ENCODE measurements at regions of chr6 and their contacts with region 1.

Region 1: DNA sequence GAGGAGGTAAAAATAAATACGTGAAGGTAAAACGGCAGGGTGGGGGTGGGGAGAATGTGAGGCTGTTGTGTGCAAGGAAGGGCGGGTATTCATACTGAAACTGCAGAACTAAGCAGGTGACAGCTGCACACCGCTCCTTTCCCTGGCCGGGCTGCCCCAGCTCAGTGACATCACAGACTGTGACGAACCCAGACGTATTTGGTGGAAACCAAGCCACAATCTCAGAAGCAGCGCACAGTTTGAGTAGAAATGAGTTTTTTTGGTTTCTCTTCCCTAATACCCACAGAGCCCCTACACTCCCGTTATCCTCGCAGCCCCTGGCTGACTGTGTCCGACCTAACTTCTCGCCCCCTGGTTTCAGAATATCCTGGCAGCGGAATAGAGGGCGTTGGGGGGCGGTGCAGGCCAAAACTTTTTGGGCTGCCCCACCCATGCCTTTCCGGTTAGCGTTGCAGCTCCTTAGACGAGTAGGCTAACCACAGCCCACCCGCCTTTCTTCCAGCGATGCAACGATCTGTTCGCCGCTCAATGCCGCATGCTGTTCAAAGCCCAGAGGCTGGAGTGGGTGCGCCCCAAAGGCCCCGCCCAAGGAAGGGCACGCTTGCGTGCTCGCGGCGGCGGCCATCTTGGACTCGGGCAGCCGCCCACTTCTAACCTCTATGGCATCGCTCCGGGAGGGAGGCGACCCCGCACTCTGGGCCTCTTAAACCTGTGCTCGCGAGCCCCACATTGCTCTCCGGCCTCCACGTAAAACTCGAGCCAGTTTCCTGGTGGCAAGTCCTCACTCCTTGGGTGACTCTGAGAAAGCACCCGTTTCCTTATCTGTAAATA is 9.1 kb downstream of the BAK1 start:
- DNase-seq: peak; percentile 98
- ATAC-seq: peak; percentile 94
- H3K4me3 Mint-ChIP-seq: peak overlapping the region; percentile 83
- H3K27ac Mint-ChIP-seq: peak overlapping the region; percentile 100
- H3K4me1 Mint-ChIP-seq: peaks cover 54% of the 10 kb centered on the region
- H3K27me3 Mint-ChIP-seq: no peaks in the 10 kb centered on the region

Region 2: GRCh38 chr6:33430991-33431879 is 139.8 kb before region 1 on chr6:
- CTCF ChIA-PET with region 1: interaction called, 4 read pairs
- POLR2A ChIA-PET with region 1: interaction called, 10 read pairs
- DNase-seq: peak; percentile 93
- ATAC-seq: peak; percentile 67
- H3K4me3 Mint-ChIP-seq: peak overlapping the region; percentile 84
- H3K27ac Mint-ChIP-seq: peak overlapping the region; percentile 86
- H3K4me1 Mint-ChIP-seq: peaks cover 65% of the 10 kb centered on the region
- H3K27me3 Mint-ChIP-seq: no peaks in the 10 kb centered on the region

Region 3: GRCh38 chr6:33454009-33454946 is 116.7 kb before region 1 on chr6 and contains the start of gene ZBTB9:
- CTCF ChIA-PET with region 1: interaction called, 5 read pairs
- POLR2A ChIA-PET with region 1: interaction called, 14 read pairs
- DNase-seq: peak; percentile 97
- ATAC-seq: peak; percentile 99
- H3K4me3 Mint-ChIP-seq: peak within 1 kb of the TSS; percentile 94
- H3K27ac Mint-ChIP-seq: peak within 1 kb of the TSS; percentile 88
- H3K4me1 Mint-ChIP-seq: peaks cover 29% of the 10 kb centered on the region
- H3K27me3 Mint-ChIP-seq: peaks cover 2% of the 10 kb centered on the region
- total RNA-seq, gene ZBTB9: 7.3 to 9.0 TPM

Region 4: GRCh38 chr6:33547499-33547898 is 23.5 kb before region 1 on chr6:
- CTCF ChIA-PET with region 1: interaction called, 7 read pairs
- POLR2A ChIA-PET with region 1: interaction called, 13 read pairs
- DNase-seq: no peak
- ATAC-seq: no peak
- H3K4me3 Mint-ChIP-seq: no peak overlapping the region
- H3K27ac Mint-ChIP-seq: peak overlapping the region; percentile 85
- H3K4me1 Mint-ChIP-seq: peaks cover 25% of the 10 kb centered on the region
- H3K27me3 Mint-ChIP-seq: no peaks in the 10 kb centered on the region

Region 5: GRCh38 chr6:33628401-33628964 is 57.5 kb after region 1 on chr6:
- CTCF ChIA-PET with region 1: no interaction called
- POLR2A ChIA-PET with region 1: no interaction called
- DNase-seq: no peak
- ATAC-seq: no peak
- H3K4me3 Mint-ChIP-seq: no peak overlapping the region
- H3K27ac Mint-ChIP-seq: no peak overlapping the region
- H3K4me1 Mint-ChIP-seq: peaks cover 49% of the 10 kb centered on the region
- H3K27me3 Mint-ChIP-seq: no peaks in the 10 kb centered on the region

Region 6: GRCh38 chr6:33840048-33840926 is 269.3 kb after region 1 on chr6:
- CTCF ChIA-PET with region 1: no interaction called
- POLR2A ChIA-PET with region 1: no interaction called
- DNase-seq: peak; percentile 63
- ATAC-seq: peak; percentile 80
- H3K4me3 Mint-ChIP-seq: no peak overlapping the region
- H3K27ac Mint-ChIP-seq: peak overlapping the region; percentile 0
- H3K4me1 Mint-ChIP-seq: peaks cover 19% of the 10 kb centered on the region
- H3K27me3 Mint-ChIP-seq: peaks cover 35% of the 10 kb centered on the region